HCT116 (cell line): ENCODE measurements at regions of chr3 and their contacts with region 1.

Region 1: DNA sequence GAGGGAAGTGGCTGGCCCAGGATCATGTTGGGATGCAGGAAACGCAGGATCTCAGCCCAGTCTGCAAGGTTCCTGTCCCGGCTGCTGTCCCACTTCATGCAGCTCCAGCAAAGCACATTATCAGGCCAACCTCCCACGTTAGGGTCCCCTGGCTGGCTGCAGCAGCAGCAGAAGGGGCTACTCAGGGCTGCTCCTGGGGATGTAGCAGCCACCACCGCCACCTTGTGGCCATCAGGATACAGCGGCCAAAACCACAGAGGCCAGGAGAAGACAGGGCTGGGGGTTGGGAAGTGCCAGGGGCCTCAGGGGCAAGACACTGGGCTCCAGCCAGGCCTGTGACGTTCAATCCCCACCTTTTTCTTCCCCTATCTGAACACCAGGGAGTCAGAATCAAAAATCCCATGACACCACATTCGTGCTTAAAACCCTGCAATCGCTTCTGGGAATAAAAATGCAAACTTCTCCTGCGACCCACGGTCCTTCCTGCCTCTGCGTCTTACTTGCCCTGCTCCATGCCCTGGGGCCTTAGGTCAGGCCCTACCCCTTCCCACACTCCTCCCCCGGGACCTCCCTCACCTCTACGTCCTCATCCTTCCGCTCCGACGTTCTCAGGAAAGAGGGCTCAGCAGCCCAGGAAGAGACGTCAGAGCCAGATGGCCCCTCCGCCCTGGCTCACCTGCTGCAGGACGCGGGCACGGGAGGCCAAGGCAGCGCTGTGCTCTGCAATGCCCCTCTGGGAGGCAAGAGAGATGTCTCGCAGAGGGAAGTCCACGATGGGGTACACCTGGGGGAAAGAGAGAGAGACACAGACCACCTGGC is 21.5 kb downstream of the SSUH2 start:
- DNase-seq: peak; percentile 29
- ATAC-seq: peak; percentile 95
- H3K4me3 ChIP-seq: no peak overlapping the region
- H3K27ac ChIP-seq: no peak overlapping the region
- H3K4me1 ChIP-seq: peaks cover 10 to 28% of the 10 kb centered on the region in 2 experiments; a peak in 3 of 4 replicates
- H3K27me3 ChIP-seq: no peaks in the 10 kb centered on the region
- CTCF ChIP-seq: peak in 2 of 3 experiments; percentile 87 to 95; a peak in 4 of 6 replicates
- POLR2A ChIP-seq: no peak
- RAD21 ChIP-seq: no peak

Region 2: DNA sequence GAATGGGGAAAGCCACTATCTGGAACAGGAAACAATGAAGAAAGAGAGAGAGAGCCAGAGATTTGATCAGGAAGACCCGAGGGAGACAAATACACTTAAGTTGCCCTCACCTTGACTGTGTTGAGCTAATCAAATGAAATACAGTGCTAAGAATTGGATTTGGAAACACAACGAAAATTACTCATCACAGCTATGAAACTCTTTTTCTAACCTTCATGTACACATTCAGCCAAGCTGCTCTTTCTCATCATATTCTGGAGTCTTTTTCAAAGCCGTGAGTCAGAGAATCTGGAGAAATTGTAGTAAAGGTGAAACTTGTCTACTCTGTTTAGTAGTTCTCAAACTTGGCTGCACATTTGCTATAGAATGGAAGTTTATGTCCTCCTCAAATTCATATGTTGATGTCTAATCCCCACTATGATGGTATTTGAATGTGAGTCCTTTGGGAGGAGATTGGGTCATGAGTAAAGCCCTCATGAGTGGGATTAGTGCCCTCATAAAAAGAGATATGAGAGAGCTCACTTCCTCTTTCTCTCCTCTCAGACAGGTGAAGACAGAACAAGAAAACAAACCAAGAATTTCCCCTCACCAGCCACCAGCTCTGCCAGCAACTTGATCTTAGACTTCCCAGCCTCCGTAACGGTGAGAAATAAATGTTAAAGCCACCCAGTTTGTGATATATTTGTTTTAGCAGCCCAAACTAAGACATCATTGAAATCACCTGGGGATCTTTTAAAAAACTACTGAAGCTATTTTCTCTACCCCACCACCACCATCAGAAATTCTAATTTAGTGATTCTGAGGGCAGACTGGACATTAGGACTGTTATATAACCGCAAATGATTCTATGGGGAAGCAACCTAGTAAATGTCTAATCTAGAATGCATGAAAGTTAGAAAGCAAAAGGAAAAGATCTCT is 1905.8 kb before region 1 on chr3:
- CTCF ChIA-PET with region 1: no interaction called
- POLR2A ChIA-PET with region 1: no interaction called
- RAD21 ChIA-PET with region 1: no interaction called
- intact Hi-C with region 1: no loop called
- DNase-seq: no peak
- ATAC-seq: no peak
- H3K4me3 ChIP-seq: no peak overlapping the region
- H3K27ac ChIP-seq: no peak overlapping the region
- H3K4me1 ChIP-seq: no peaks in the 10 kb centered on the region
- H3K27me3 ChIP-seq: no peaks in the 10 kb centered on the region; the same call in 1 of the 2 replicates
- CTCF ChIP-seq: no peak
- POLR2A ChIP-seq: no peak
- RAD21 ChIP-seq: no peak

Region 3: GRCh38 chr3:7754653-7755441 is 868.2 kb before region 1 on chr3:
- CTCF ChIA-PET with region 1: no interaction called
- POLR2A ChIA-PET with region 1: no interaction called
- RAD21 ChIA-PET with region 1: no interaction called
- intact Hi-C with region 1: no loop called
- DNase-seq: no peak
- ATAC-seq: no peak
- H3K4me3 ChIP-seq: no peak overlapping the region
- H3K27ac ChIP-seq: no peak overlapping the region
- H3K4me1 ChIP-seq: no peaks in the 10 kb centered on the region
- H3K27me3 ChIP-seq: no peaks in the 10 kb centered on the region
- CTCF ChIP-seq: no peak
- POLR2A ChIP-seq: no peak
- RAD21 ChIP-seq: no peak

Region 4: DNA sequence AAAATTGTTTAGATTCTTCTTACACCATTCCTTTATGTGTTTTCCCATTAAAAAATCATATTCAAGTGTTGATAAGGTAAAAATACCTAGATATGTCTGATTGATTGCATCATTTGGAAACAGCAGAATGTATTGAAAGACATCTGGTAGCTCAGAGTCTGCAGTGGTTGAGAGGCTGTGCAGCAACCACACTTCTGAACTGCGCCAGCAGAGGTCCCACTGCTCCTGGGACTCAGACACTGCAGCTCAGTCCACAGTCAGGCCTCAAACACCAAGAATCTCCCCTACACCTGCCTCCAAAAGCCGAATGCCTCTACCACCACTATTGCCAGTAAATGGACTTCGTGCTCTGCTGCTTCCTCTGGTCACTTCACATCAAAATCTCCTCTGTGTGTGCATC is 298.3 kb before region 1 on chr3:
- CTCF ChIA-PET with region 1: interaction called, 4 read pairs
- POLR2A ChIA-PET with region 1: no interaction called
- RAD21 ChIA-PET with region 1: no interaction called
- intact Hi-C with region 1: loop called (anchors 2 kb)
- DNase-seq: peak; percentile 40
- ATAC-seq: peak; percentile 98
- H3K4me3 ChIP-seq: no peak overlapping the region
- H3K27ac ChIP-seq: no peak overlapping the region
- H3K4me1 ChIP-seq: peaks cover 0 to 8% of the 10 kb centered on the region in 2 experiments; a peak in 1 of 4 replicates
- H3K27me3 ChIP-seq: peaks cover 25% of the 10 kb centered on the region
- CTCF ChIP-seq: peak; percentile 42 to 83 (median 73)
- POLR2A ChIP-seq: no peak
- RAD21 ChIP-seq: peak; percentile 65

Region 5: GRCh38 chr3:8441969-8442559 is 181.0 kb before region 1 on chr3:
- CTCF ChIA-PET with region 1: interaction called, 8 read pairs
- POLR2A ChIA-PET with region 1: interaction called, 4 read pairs
- RAD21 ChIA-PET with region 1: no interaction called
- intact Hi-C with region 1: loop called (anchors 1 kb)
- DNase-seq: peak; percentile 39
- ATAC-seq: peak; percentile 70
- H3K4me3 ChIP-seq: no peak overlapping the region
- H3K27ac ChIP-seq: no peak overlapping the region
- H3K4me1 ChIP-seq: peaks cover 9 to 24% of the 10 kb centered on the region in 2 experiments; a peak in 3 of 4 replicates
- H3K27me3 ChIP-seq: no peaks in the 10 kb centered on the region
- CTCF ChIP-seq: peak; percentile 71 to 80 (median 73)
- POLR2A ChIP-seq: no peak
- RAD21 ChIP-seq: peak; percentile 85

Region 6: GRCh38 chr3:8501371-8502131 is 121.5 kb before region 1 on chr3 and contains the start of gene LMCD1:
- CTCF ChIA-PET with region 1: no interaction called
- POLR2A ChIA-PET with region 1: no interaction called
- RAD21 ChIA-PET with region 1: no interaction called
- intact Hi-C with region 1: loop called (anchors 5 kb)
- DNase-seq: peak; percentile 83
- ATAC-seq: peak; percentile 98
- H3K4me3 ChIP-seq: peak within 1 kb of the TSS; percentile 38 to 51
- H3K27ac ChIP-seq: no peak within 1 kb of the TSS
- H3K4me1 ChIP-seq: peaks cover 15 to 50% of the 10 kb centered on the region in 2 experiments
- H3K27me3 ChIP-seq: no peaks in the 10 kb centered on the region
- CTCF ChIP-seq: no peak
- POLR2A ChIP-seq: no peak
- RAD21 ChIP-seq: no peak
- total RNA-seq, gene LMCD1: 4.6 TPM